HCT116 (cell line): ENCODE measurements at regions of chr9 and their contacts with region 1.

Region 1: GRCh38 chr9:28866951-28867350 is 1293.7 kb upstream of the C9orf72 start:
- DNase-seq: no peak
- ATAC-seq: no peak
- H3K4me3 ChIP-seq: no peak overlapping the region
- H3K27ac ChIP-seq: no peak overlapping the region
- H3K4me1 ChIP-seq: no peaks in the 10 kb centered on the region
- H3K27me3 ChIP-seq: no peaks in the 10 kb centered on the region
- CTCF ChIP-seq: no peak
- POLR2A ChIP-seq: no peak
- RAD21 ChIP-seq: no peak

Region 2: DNA sequence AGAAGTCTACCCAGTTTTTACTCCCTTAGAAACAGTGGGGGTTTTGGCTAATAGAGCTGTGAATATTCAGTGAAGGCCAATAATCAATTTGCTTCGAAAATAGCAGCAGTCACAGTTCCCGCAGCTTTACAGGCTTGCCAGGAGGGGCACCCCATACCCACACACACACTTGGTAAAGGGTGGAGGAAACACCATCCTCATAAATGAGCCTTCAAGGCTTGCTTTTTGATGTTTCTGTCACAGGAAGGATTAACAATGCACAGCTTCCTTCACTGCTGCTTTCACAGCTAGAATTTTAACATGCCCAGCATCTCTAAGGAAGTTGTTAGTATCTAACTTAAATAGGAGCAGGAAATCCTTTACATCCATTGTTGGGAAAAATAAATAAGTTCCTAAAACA is 46.2 kb before region 1 on chr9:
- CTCF ChIA-PET with region 1: no interaction called
- POLR2A ChIA-PET with region 1: no interaction called
- RAD21 ChIA-PET with region 1: no interaction called
- intact Hi-C with region 1: no loop called
- DNase-seq: no peak
- ATAC-seq: no peak
- H3K4me3 ChIP-seq: no peak overlapping the region
- H3K27ac ChIP-seq: no peak overlapping the region
- H3K4me1 ChIP-seq: no peaks in the 10 kb centered on the region
- H3K27me3 ChIP-seq: no peaks in the 10 kb centered on the region
- CTCF ChIP-seq: 0 out of 6 replicates have a peak, but pooled peaks of 2 of the 3 experiments have one; percentile 10 to 17
- POLR2A ChIP-seq: no peak
- RAD21 ChIP-seq: no peak

Region 3: GRCh38 chr9:28922891-28923290 is 55.9 kb after region 1 on chr9:
- CTCF ChIA-PET with region 1: no interaction called
- POLR2A ChIA-PET with region 1: no interaction called
- RAD21 ChIA-PET with region 1: no interaction called
- intact Hi-C with region 1: loop called (anchors 5 kb)
- DNase-seq: no peak
- ATAC-seq: no peak
- H3K4me3 ChIP-seq: no peak overlapping the region
- H3K27ac ChIP-seq: no peak overlapping the region
- H3K4me1 ChIP-seq: no peaks in the 10 kb centered on the region
- H3K27me3 ChIP-seq: no peaks in the 10 kb centered on the region
- CTCF ChIP-seq: no peak
- POLR2A ChIP-seq: no peak
- RAD21 ChIP-seq: no peak